SK-N-SH (cell line): ENCODE measurements at regions of chr14 and their contacts with region 1.

Region 1: DNA sequence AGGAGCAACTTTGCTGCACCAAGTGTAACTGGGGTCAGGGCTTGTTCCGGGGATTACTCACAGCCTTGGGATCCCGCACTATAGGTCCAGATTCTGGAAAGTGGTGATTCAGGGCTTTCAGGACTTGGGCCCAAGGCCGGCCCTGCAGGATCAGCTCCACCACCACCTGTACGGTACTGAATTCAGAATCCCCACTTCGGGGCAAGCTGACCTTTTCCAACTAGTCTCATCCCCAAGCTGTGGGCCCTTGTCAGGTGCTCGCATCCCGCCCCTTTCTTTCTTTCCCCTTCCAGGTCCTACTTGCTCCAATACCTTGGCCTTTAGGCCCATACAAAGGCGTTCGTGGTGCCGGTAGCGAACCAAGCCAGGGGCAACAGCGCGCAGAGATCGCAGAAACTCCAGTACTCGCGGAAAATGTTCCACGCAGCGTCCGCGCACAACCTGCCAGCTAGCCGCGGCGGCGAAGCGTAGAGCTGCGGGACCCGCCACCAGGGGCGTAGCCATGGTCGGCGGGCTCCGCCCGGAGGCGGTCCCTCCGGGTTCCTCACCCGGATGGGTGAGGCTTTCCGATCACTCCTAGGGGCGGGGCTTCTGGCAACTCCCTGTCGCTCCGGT is 487 bp downstream of the TINF2 start:
- DNase-seq: peak; percentile 96
- H3K4me3 ChIP-seq: peak overlapping the region; percentile 68 to 94
- H3K27ac ChIP-seq: peak overlapping the region; percentile 96
- H3K4me1 ChIP-seq: peaks cover 26% of the 10 kb centered on the region in 2 experiments; a peak in 2 of 4 replicates
- H3K27me3 ChIP-seq: no peaks in the 10 kb centered on the region
- CTCF ChIP-seq: peak; percentile 40
- EP300 ChIP-seq: no peak
- RAD21 ChIP-seq: no peak

Region 2: DNA sequence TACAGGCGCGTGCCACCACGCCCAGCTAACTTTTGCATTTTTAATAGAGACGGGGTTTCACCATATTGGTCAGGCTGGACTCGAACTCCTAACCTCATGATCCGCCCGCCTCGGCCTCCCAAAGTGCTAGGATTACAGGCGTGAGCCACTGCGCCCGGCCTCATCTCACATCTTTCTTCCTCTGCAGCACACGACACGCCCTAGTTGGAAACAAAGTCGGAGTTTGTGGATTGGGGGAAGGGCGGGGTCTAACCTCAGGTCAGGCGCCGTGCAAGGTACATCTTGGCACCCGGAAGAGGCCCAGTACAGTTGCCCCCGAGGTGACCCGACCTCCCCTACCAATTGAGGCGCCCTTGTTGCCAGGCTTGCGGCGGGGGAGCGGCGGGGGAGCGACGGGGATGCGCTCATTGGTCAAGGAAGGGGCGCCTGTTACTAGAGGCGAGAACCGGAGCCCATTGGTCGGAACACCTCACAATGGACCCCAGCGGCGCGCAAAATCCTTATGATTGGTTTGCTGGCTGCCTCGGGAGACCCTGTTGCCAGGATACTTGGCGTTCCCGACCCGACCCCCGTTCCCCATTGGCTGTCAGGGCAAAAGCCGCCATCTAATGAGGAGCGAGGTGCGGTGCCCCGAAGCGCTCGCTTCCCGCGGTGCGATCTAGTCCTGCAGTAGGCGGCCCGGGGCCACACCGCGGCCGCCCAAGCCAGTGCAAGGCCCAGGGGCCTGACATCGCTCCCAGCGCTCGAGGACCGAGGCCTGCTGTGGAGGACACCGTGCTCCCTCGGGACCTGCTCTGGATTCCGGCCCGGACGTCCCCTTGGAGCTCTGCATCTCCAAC is 70.3 kb before region 1 on chr14 and contains the start of gene REC8:
- CTCF ChIA-PET with region 1: no interaction called
- POLR2A ChIA-PET with region 1: no interaction called
- DNase-seq: peak; percentile 97
- H3K4me3 ChIP-seq: peak within 1 kb of the TSS; percentile 46 to 54; a peak in 3 of 4 replicates
- H3K27ac ChIP-seq: peak within 1 kb of the TSS in 1 of 2 experiments; percentile 90; a peak in 2 of 4 replicates
- H3K4me1 ChIP-seq: peaks cover 0 to 11% of the 10 kb centered on the region in 2 experiments; a peak in 1 of 4 replicates
- H3K27me3 ChIP-seq: no peaks in the 10 kb centered on the region
- CTCF ChIP-seq: no peak
- EP300 ChIP-seq: peak in 1 of 2 experiments; percentile 52; a peak in 1 of 4 replicates
- RAD21 ChIP-seq: no peak
- polyA plus RNA-seq, gene REC8: 13.1 and 23.2 TPM in 2 replicates

Region 3: DNA sequence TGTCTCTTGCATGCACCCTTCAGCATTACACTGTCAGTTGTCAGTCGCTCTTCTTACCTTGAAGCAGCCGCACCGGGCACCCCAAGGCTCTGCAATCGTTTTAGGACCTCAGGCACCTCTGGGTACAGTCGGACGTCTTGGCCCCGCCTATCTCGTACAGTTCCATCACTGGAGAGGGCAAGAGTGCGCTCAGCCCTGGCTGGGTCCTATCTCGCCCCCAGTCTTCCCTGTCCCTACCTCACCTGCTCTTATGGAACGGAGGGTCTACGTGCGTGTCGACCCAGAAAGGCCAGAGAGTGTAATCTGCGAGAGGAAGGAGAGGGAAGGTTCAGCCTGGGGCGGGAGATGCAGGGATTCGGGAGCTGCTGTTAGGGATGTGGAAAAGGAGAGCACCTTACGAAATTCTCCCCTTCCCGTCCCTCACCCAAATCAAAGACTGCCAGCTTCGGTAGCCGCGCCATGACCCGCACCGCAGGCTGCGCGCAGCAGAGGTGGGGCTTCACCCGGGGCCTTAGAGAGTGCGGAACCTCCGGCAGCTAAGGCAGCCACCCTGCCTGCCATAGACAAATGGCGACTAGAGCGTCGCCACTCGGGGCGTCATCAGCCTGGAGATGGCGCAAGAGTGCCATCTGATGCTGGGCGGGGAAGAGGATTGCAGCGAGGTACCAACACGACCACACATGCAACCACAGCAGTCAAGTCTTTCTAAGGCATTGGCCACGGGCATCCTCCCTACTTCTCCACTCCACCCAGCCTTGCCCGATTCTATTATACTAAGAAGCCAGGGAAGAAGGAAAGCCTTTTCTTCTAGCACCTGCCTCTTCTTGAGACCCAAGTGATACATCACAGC is 26.2 kb before region 1 on chr14 and contains the start of gene MDP1:
- CTCF ChIA-PET with region 1: interaction called, 20 read pairs
- POLR2A ChIA-PET with region 1: interaction called, 13 read pairs
- DNase-seq: peak; percentile 86
- H3K4me3 ChIP-seq: peak within 1 kb of the TSS; percentile 73 to 82
- H3K27ac ChIP-seq: peak within 1 kb of the TSS; percentile 71 to 88
- H3K4me1 ChIP-seq: peaks cover 9 to 17% of the 10 kb centered on the region in 2 experiments; a peak in 3 of 4 replicates
- H3K27me3 ChIP-seq: no peaks in the 10 kb centered on the region
- CTCF ChIP-seq: peak; percentile 70
- EP300 ChIP-seq: no peak
- RAD21 ChIP-seq: peak; percentile 69
- polyA plus RNA-seq, gene MDP1: 36.4 and 36.7 TPM in 2 replicates

Region 4: GRCh38 chr14:24259252-24259995 is 17.5 kb after region 1 on chr14:
- CTCF ChIA-PET with region 1: interaction called, 20 read pairs
- POLR2A ChIA-PET with region 1: no interaction called
- DNase-seq: no peak
- H3K4me3 ChIP-seq: no peak overlapping the region
- H3K27ac ChIP-seq: no peak overlapping the region
- H3K4me1 ChIP-seq: peaks cover 0 to 3% of the 10 kb centered on the region in 2 experiments; a peak in 1 of 4 replicates
- H3K27me3 ChIP-seq: no peaks in the 10 kb centered on the region
- CTCF ChIP-seq: no peak
- EP300 ChIP-seq: no peak
- RAD21 ChIP-seq: no peak

Region 5: GRCh38 chr14:24271134-24271833 is 29.3 kb after region 1 on chr14 and contains the start of gene RABGGTA:
- CTCF ChIA-PET with region 1: interaction called, 37 read pairs
- POLR2A ChIA-PET with region 1: interaction called, 23 read pairs
- DNase-seq: peak; percentile 97
- H3K4me3 ChIP-seq: peak within 1 kb of the TSS; percentile 82 to 83
- H3K27ac ChIP-seq: peak within 1 kb of the TSS; percentile 87 to 95
- H3K4me1 ChIP-seq: peaks cover 6 to 10% of the 10 kb centered on the region in 2 experiments; a peak in 2 of 4 replicates
- H3K27me3 ChIP-seq: no peaks in the 10 kb centered on the region
- CTCF ChIP-seq: peak; percentile 68
- EP300 ChIP-seq: peak in 1 of 2 experiments; percentile 62; a peak in 2 of 4 replicates
- RAD21 ChIP-seq: no peak
- polyA plus RNA-seq, gene RABGGTA: 54.9 and 59.4 TPM in 2 replicates

Region 6: GRCh38 chr14:24279301-24280186 is 37.6 kb after region 1 on chr14:
- CTCF ChIA-PET with region 1: interaction called, 11 read pairs
- POLR2A ChIA-PET with region 1: interaction called, 4 read pairs
- DNase-seq: peak; percentile 67
- H3K4me3 ChIP-seq: no peak overlapping the region
- H3K27ac ChIP-seq: no peak overlapping the region
- H3K4me1 ChIP-seq: peaks cover 0 to 10% of the 10 kb centered on the region in 2 experiments; a peak in 1 of 4 replicates
- H3K27me3 ChIP-seq: no peaks in the 10 kb centered on the region
- CTCF ChIP-seq: peak; percentile 47
- EP300 ChIP-seq: no peak; a peak in 1 of 4 replicates
- RAD21 ChIP-seq: peak; percentile 60

Region 7: DNA sequence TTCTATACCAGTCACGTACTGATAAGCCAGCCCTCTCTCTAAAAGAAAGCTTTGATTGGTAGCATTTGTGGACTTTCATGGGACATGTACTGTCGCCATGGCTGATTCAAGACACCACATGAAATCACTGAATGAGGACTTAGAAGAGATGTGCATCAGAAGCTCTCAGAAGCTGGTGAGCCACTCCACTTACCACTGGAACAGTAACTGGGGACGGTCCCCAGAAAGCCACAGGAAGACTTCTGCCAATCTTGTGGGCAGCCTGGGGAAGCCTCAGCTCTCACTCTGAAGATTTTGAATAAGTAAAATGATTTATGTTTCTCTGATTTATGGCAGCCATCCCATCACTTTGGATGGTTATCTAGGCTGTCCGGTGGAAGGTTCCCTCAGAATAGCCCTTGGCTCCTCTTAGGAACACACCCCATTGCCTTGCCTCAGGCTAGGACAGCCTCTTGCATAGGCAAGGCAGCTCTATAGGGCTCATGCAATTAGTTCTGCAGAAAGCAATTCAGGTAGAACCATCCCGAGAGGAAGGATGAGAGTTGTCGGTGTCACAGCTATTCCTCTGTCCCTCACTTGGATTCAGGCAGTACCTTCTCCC is 47.8 kb after region 1 on chr14:
- CTCF ChIA-PET with region 1: interaction called, 43 read pairs
- POLR2A ChIA-PET with region 1: no interaction called
- DNase-seq: no peak
- H3K4me3 ChIP-seq: no peak overlapping the region
- H3K27ac ChIP-seq: no peak overlapping the region
- H3K4me1 ChIP-seq: no peaks in the 10 kb centered on the region
- H3K27me3 ChIP-seq: no peaks in the 10 kb centered on the region
- CTCF ChIP-seq: no peak
- EP300 ChIP-seq: no peak
- RAD21 ChIP-seq: no peak

Region 8: GRCh38 chr14:24310646-24311604 is 69.0 kb after region 1 on chr14 and contains the start of gene LTB4R:
- CTCF ChIA-PET with region 1: interaction called, 66 read pairs
- POLR2A ChIA-PET with region 1: interaction called, 6 read pairs
- DNase-seq: no peak
- H3K4me3 ChIP-seq: no peak within 1 kb of the TSS
- H3K27ac ChIP-seq: no peak within 1 kb of the TSS
- H3K4me1 ChIP-seq: peaks cover 0 to 2% of the 10 kb centered on the region in 2 experiments; a peak in 1 of 4 replicates
- H3K27me3 ChIP-seq: no peaks in the 10 kb centered on the region
- CTCF ChIP-seq: no peak
- EP300 ChIP-seq: no peak
- RAD21 ChIP-seq: no peak
- polyA plus RNA-seq, gene LTB4R: 11.9 and 14.0 TPM in 2 replicates

Region 9: GRCh38 chr14:24403294-24403998 is 161.5 kb after region 1 on chr14:
- CTCF ChIA-PET with region 1: no interaction called
- POLR2A ChIA-PET with region 1: no interaction called
- DNase-seq: no peak
- H3K4me3 ChIP-seq: no peak overlapping the region
- H3K27ac ChIP-seq: no peak overlapping the region
- H3K4me1 ChIP-seq: peaks cover 0 to 24% of the 10 kb centered on the region in 2 experiments; a peak in 1 of 4 replicates
- H3K27me3 ChIP-seq: no peaks in the 10 kb centered on the region
- CTCF ChIP-seq: no peak
- EP300 ChIP-seq: no peak
- RAD21 ChIP-seq: no peak